Activated B cell treated with CpG ODN at 0.5 μM for 24 hours (primary cell): ENCODE measurements at regions of chr9 and their contacts with region 1.

Region 1: DNA sequence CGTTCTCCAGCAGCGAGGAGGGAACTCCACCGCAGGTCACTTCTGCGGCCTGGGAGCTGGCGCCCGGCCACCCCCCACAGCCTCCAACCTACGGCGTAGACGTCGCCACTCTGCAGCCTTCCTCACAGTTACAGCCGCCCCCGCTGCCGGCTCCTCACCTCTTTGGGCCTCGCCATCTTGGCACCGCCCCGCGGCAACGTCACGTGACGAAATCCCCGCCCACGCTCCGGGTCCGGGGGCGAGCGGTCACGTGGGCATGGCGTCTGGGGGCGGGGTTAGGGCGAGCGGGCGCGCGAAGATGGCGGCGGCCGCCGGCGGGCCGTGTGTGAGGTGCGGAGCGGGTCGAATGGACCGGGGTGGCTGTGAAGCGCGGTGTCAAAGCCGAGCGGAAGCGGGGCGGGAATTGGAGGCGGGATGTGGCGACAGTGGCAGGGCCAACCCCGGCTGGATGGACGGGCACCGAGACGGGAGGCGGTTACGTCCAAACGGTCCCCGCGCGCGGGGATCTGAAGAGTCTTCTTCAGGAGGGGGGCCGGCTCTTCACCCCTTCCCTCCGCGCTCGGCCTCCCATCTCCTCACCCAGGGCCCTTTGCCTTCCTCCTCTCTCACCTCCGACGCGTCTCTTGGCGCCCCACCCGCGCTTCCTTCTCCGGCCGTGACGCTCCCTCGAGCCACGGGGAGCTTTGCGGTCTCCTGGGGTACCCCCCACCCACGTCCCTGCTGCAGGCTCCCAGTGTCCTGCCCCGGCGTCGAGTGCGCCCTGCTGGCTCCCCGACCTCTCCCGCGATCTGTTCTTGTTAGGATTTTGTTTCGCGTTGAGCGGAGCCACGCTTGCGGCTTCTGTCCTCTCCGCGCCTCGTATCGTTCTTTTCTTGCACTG is at the starts of genes DOLK and NUP188:
- DNase-seq: peak; percentile 100
- ATAC-seq: peak; percentile 86
- H3K4me3 Mint-ChIP-seq: peak within 1 kb of the TSS; percentile 98
- H3K27ac Mint-ChIP-seq: peak within 1 kb of the TSS; percentile 97
- H3K4me1 Mint-ChIP-seq: peaks cover 29% of the 10 kb centered on the region
- H3K27me3 Mint-ChIP-seq: no peaks in the 10 kb centered on the region
- CTCF ChIP-seq: no peak
- total RNA-seq, gene DOLK: 9.0 and 10.3 TPM in 2 replicates
- total RNA-seq, gene NUP188: 76.9 and 103 TPM in 2 replicates

Region 2: DNA sequence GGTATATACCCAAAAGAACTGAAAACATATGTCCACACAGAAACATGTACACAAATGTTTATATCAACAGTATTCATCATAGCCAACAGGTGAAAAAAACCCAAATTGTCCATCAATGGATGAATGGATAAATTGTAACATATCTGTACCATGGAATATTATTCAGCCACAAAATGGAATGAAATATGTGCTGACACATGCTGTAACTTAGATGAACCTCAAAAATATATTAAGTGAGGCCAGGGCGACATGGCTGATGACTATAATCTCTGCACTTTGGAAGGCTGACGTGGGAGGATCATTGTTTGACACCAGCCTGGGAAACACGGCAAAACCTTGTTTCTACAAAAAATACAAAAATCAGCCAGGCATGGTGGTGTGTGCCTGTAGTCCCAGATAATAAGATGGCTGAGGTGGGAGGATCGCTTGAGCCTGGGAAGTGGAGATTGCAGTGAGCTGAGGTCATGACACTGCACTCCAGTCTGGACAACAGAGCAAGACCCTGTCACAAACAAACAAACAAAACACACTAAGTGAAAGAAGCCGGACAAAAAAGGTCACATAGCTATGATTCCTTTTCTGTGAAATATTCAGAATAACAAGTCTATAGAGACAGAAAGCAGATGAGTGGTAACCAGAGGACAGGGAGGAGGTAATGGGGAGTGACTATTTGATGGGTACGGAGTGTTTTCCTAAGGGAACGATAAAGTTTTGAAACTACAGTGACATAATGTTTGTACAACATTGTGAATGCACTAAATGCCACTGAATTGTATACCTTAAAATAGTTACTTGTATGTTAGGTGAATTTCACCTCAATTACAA is 77.3 kb before region 1 on chr9:
- CTCF ChIA-PET with region 1: no interaction called
- POLR2A ChIA-PET with region 1: no interaction called
- intact Hi-C with region 1: no loop called
- DNase-seq: no peak
- ATAC-seq: no peak
- H3K4me3 Mint-ChIP-seq: no peak overlapping the region
- H3K27ac Mint-ChIP-seq: no peak overlapping the region
- H3K4me1 Mint-ChIP-seq: peaks cover 2% of the 10 kb centered on the region
- H3K27me3 Mint-ChIP-seq: no peaks in the 10 kb centered on the region
- CTCF ChIP-seq: no peak

Region 3: DNA sequence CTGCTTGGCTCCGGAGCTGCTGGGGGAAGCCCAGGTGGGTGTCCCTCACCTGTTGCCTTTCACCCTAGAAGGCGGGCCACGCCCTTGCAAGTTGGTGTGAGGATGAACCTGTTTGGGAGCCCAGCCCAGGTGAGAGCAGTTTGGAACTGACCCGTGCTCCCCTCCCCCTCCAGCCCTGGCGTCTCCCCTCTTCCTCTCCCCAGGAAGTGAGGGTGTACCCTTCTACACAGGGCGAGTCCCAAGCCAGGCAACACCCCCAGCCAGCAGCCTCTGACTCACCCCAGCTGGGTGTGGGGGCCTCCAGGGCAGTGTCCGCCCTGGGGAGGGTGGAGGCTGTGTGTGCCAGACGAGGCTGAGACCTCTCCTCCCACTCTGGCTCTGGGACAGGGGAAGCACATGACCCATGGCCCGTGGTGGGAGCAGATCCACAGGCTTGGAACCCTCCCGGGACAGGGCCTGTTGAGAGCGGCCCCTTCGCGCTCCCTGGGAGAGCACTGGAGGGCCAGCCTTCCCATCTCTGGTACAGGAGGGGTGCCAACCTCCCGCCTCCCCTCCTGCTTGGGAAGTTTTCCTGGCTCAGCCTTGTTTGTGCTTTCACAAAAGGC is 55.2 kb before region 1 on chr9:
- CTCF ChIA-PET with region 1: no interaction called
- POLR2A ChIA-PET with region 1: no interaction called
- intact Hi-C with region 1: no loop called
- DNase-seq: no peak
- ATAC-seq: no peak
- H3K4me3 Mint-ChIP-seq: no peak overlapping the region
- H3K27ac Mint-ChIP-seq: no peak overlapping the region
- H3K4me1 Mint-ChIP-seq: peaks cover 12% of the 10 kb centered on the region
- H3K27me3 Mint-ChIP-seq: no peaks in the 10 kb centered on the region
- CTCF ChIP-seq: no peak

Region 4: GRCh38 chr9:129006328-129007034 is 58.8 kb after region 1 on chr9:
- CTCF ChIA-PET with region 1: no interaction called
- POLR2A ChIA-PET with region 1: interaction called, 11 read pairs
- intact Hi-C with region 1: no loop called
- DNase-seq: no peak
- ATAC-seq: peak; percentile 82
- H3K4me3 Mint-ChIP-seq: no peak overlapping the region
- H3K27ac Mint-ChIP-seq: no peak overlapping the region
- H3K4me1 Mint-ChIP-seq: peaks cover 6% of the 10 kb centered on the region
- H3K27me3 Mint-ChIP-seq: no peaks in the 10 kb centered on the region
- CTCF ChIP-seq: peak; percentile 29